ENCODE measurements at regions of chr15 and their contacts with region 1.

Region 1: GRCh38 chr15:56765251-56765650 is 31.9 kb upstream of the ZNF280D start:
- DNase-seq: no peak
- H3K4me3 Mint-ChIP-seq: no peak overlapping the region
- H3K27ac Mint-ChIP-seq: no peak overlapping the region
- H3K4me1 Mint-ChIP-seq: peaks cover 23% of the 10 kb centered on the region
- H3K27me3 Mint-ChIP-seq: no peaks in the 10 kb centered on the region

Region 2: GRCh38 chr15:56732921-56733797 is 32.1 kb before region 1 on chr15 and contains the start of gene ZNF280D:
- CTCF ChIA-PET with region 1: no interaction called
- POLR2A ChIA-PET with region 1: interaction called, 3 read pairs
- intact Hi-C with region 1: loop called (anchors 2 kb)
- DNase-seq: peak; percentile 85
- H3K4me3 Mint-ChIP-seq: peak within 1 kb of the TSS; percentile 93
- H3K27ac Mint-ChIP-seq: peak within 1 kb of the TSS; percentile 93
- H3K4me1 Mint-ChIP-seq: peaks cover 32% of the 10 kb centered on the region
- H3K27me3 Mint-ChIP-seq: no peaks in the 10 kb centered on the region
- total RNA-seq, gene ZNF280D: 18.0 to 19.3 TPM

Region 3: GRCh38 chr15:56786966-56787365 is 21.7 kb after region 1 on chr15:
- CTCF ChIA-PET with region 1: interaction called, 4 read pairs
- POLR2A ChIA-PET with region 1: no interaction called
- intact Hi-C with region 1: loop called (anchors 1 kb)
- DNase-seq: no peak
- H3K4me3 Mint-ChIP-seq: peak overlapping the region; percentile 30
- H3K27ac Mint-ChIP-seq: peak overlapping the region; percentile 76
- H3K4me1 Mint-ChIP-seq: peaks cover 14% of the 10 kb centered on the region
- H3K27me3 Mint-ChIP-seq: peaks cover 2% of the 10 kb centered on the region

Region 4: DNA sequence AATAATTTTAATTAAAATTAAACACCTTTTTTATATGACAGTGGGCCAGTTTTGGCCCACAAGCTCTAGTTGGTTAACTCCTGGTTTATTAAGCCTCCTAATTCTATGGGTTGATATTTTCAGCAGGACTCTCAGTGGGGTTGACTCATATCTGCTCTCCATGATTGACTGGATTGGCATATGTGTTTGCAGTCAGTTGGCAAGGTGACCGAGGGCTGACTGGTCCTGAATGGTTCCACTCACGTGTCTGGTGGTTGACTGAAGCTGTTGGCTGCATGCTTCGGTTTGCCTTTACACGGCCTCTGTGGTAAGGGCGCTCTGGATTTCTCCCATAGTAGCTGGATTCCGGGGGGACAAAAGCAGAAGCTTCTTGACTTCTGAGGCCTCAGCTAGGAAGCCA is 33.4 kb after region 1 on chr15:
- CTCF ChIA-PET with region 1: no interaction called
- POLR2A ChIA-PET with region 1: no interaction called
- intact Hi-C with region 1: loop called (anchors 2 kb)
- DNase-seq: peak; percentile 79
- H3K4me3 Mint-ChIP-seq: no peak overlapping the region
- H3K27ac Mint-ChIP-seq: no peak overlapping the region
- H3K4me1 Mint-ChIP-seq: peaks cover 8% of the 10 kb centered on the region
- H3K27me3 Mint-ChIP-seq: peaks cover 8% of the 10 kb centered on the region

Region 5: DNA sequence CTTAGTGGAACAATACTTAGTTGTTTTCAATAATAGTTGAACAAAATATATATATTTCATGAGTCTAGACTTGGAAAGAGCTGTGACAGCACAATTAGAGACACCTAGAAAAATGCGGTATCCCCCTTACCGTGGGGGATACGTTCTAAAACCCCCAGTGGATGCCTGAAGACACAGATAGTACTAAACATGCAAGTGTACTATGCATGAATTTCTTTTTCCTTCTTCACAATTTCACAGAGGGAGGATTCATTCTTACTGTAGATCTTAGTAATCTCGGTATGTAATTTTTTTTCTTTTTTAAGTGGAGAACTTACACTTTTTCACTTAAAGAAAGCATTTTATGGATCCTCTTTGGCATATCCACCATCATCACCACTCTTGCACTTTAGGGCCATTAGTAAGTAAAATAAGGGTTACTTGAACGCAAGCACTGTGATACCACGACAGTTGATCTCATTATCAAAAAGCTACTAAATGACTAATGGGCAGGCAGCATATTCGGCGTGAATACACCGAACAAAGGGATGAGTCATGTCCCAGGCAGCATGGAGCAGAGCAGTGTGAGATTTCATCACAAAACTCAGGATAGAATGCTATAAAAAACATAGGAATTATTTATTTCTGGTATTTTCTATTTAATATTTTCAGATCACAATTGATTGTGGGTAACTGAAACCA is 40.4 kb after region 1 on chr15:
- CTCF ChIA-PET with region 1: no interaction called
- POLR2A ChIA-PET with region 1: no interaction called
- intact Hi-C with region 1: loop called (anchors 1 kb)
- DNase-seq: peak; percentile 57
- H3K4me3 Mint-ChIP-seq: peak overlapping the region; percentile 34
- H3K27ac Mint-ChIP-seq: peak overlapping the region; percentile 33
- H3K4me1 Mint-ChIP-seq: peaks cover 6% of the 10 kb centered on the region
- H3K27me3 Mint-ChIP-seq: peaks cover 7% of the 10 kb centered on the region

Region 6: DNA sequence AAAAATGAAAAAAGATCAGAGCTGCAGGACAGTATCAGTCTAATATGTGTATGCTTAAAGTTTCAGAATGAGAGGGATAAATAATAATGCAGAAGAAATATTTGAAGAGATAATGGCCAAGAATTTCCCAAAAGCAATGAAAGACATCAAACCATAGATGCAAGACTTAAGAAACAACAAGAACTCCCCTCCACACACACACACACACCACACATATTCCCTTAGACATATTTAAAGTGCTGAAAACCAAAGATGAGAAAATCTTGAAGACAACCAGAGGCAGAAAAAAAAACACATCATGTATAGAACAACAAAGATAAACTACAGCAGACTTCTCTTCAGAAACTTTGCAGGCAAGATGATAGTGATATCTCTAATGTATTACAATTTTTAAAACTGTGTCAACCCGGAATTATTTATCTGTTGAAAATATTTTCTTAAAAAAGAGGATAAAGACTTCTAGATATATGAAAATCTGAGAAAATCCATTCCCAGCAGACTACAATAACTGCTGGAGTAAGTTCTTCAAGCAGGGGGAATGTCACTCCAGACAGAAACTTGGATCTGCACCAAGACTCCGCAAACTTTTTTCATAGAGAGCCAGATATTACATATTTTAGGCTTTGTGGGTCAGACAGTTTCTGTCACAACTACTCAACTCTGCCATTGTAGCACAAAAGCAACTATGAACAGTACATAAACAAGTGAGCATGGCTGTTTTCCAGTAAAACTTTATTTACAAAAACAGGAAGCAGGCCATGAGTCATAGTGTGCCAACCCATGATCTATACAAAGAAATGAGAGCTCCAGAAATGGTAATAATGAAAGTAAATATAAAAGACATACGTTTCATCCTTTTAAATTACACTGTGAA is 387.7 kb after region 1 on chr15:
- CTCF ChIA-PET with region 1: no interaction called
- POLR2A ChIA-PET with region 1: no interaction called
- intact Hi-C with region 1: loop called (anchors 5 kb)
- DNase-seq: peak; percentile 29
- H3K4me3 Mint-ChIP-seq: no peak overlapping the region
- H3K27ac Mint-ChIP-seq: peak overlapping the region; percentile 16
- H3K4me1 Mint-ChIP-seq: peaks cover 21% of the 10 kb centered on the region
- H3K27me3 Mint-ChIP-seq: no peaks in the 10 kb centered on the region